K562 (cell line): ENCODE measurements at regions of chr6 and their contacts with region 1.

Region 1: DNA sequence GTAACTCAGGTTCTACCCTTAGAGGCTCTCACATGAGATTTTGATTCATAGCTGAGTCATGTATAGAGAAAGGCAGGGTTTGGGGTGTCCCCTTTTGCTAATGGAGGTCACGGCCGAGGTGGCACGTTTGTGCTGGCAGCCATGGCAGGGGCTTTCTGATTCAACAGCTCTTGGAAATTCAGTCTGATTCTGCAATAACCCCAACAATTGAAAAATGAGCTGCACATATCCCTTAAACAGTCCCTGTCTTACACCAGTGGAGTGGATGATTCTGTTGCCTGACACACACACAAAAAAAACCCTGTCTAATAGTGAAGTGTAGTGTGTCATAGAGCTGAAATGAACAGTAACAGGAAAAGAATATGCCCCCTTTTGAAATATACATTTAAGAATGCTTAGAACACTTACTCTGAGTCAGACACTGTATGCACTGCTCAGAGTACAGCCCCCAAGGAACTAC is 40.4 kb upstream of the ARG1 start:
- DNase-seq: no peak
- ATAC-seq: no peak
- H3K4me3 ChIP-seq: no peak overlapping the region
- H3K27ac ChIP-seq: no peak overlapping the region
- H3K4me1 ChIP-seq: no peaks in the 10 kb centered on the region
- H3K27me3 ChIP-seq: no peaks in the 10 kb centered on the region; a peak in 1 of 5 replicates
- CTCF ChIP-seq: no peak
- EP300 ChIP-seq: no peak
- POLR2A ChIP-seq: no peak
- RAD21 ChIP-seq: no peak

Region 2: GRCh38 chr6:130322673-130323268 is 1209.8 kb before region 1 on chr6:
- CTCF ChIA-PET with region 1: no interaction called
- POLR2A ChIA-PET with region 1: no interaction called
- in situ Hi-C with region 1: no loop called
- intact Hi-C with region 1: loop called (anchors 2 kb)
- DNase-seq: peak; percentile 9 to 62 (median 30)
- ATAC-seq: peak; percentile 80
- H3K4me3 ChIP-seq: no peak overlapping the region
- H3K27ac ChIP-seq: no peak overlapping the region
- H3K4me1 ChIP-seq: no peaks in the 10 kb centered on the region
- H3K27me3 ChIP-seq: no peaks in the 10 kb centered on the region
- CTCF ChIP-seq: peak; percentile 62 to 85 (median 77)
- EP300 ChIP-seq: no peak
- POLR2A ChIP-seq: no peak
- RAD21 ChIP-seq: peak; percentile 89

Region 3: DNA sequence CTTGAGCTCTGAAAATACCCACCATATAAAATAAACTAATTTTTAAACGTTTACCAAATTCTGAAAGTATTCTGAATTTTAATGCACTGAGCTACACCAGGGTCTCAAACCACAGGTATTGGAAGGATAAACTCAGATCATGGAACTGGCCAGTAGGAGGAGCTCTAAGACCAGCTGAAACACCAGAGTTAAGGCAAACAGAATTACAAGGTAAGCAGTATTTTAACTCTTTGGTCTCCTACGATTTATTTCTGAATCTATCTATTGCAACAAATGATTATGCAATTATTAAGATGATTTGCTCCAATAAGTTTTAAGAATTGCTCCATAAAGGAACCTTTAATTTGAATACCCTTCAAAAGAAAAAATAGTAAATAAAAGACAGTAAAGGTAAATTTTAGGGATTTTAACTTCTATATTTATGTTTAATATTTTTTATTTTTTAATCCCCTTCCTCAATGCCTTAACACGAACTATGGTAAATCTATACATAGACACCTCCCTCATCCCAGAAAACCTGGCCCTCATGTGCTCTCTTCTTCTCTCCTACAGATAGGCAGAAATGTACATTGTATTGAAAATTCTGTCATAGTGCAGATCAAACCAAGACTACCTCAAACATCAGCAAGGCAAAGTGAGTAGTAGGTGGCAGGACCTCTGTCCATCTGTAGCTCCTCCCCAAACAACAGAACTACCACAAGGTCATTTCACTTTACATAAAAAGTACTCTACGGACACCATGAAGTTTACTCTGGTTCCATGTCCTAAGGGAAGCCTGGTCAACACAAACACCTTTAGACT is 647.0 kb before region 1 on chr6:
- CTCF ChIA-PET with region 1: interaction called, 9 read pairs
- POLR2A ChIA-PET with region 1: no interaction called
- in situ Hi-C with region 1: loop called (anchors 25 kb)
- intact Hi-C with region 1: loop called (anchors 1 kb)
- DNase-seq: peak; percentile 58 to 82 (median 68)
- ATAC-seq: peak; percentile 98
- H3K4me3 ChIP-seq: no peak overlapping the region
- H3K27ac ChIP-seq: no peak overlapping the region
- H3K4me1 ChIP-seq: no peaks in the 10 kb centered on the region
- H3K27me3 ChIP-seq: no peaks in the 10 kb centered on the region
- CTCF ChIP-seq: peak; percentile 75 to 92 (median 81)
- EP300 ChIP-seq: no peak
- POLR2A ChIP-seq: no peak
- RAD21 ChIP-seq: peak; percentile 94 to 98

Region 4: DNA sequence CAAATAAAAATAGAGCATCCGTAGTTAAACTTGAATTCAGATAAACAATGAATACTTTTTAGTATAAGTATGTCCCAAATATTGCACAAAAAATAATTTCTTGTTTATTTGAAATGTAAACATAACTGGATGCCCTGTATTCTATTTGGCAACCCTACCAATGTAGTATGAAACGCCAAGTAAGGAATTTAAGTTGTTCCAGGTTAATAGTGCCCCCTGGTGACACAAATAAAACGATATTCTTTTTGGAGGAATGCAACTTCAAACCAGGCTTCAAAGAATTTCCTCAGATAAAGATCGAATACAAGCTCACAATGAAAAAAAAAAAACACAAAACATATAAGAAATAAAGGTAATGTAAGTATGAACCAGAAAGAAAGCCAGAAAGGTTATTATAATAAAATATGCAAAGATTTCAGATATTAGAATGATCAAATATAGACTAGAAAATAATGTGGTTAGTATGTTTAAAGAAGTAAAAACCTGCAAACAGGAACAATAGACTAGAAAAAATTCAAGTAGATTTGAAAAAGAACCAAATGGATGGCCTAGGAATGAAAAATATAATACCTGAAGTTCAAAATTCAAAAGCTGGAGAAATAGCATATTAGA is 415.8 kb before region 1 on chr6:
- CTCF ChIA-PET with region 1: no interaction called
- POLR2A ChIA-PET with region 1: no interaction called
- in situ Hi-C with region 1: no loop called
- intact Hi-C with region 1: loop called (anchors 5 kb)
- DNase-seq: peak; percentile 22 to 55 (median 40)
- ATAC-seq: peak; percentile 82
- H3K4me3 ChIP-seq: no peak overlapping the region
- H3K27ac ChIP-seq: no peak overlapping the region
- H3K4me1 ChIP-seq: no peaks in the 10 kb centered on the region
- H3K27me3 ChIP-seq: no peaks in the 10 kb centered on the region
- CTCF ChIP-seq: peak; percentile 37 to 63 (median 42); a peak in 4 of 6 replicates
- EP300 ChIP-seq: no peak
- POLR2A ChIP-seq: no peak
- RAD21 ChIP-seq: peak; percentile 83 to 86

Region 5: GRCh38 chr6:131182991-131183425 is 349.6 kb before region 1 on chr6:
- CTCF ChIA-PET with region 1: no interaction called
- POLR2A ChIA-PET with region 1: no interaction called
- in situ Hi-C with region 1: no loop called
- intact Hi-C with region 1: loop called (anchors 1 kb)
- DNase-seq: peak in 2 of 4 experiments; percentile 13 to 25
- ATAC-seq: peak; percentile 83
- H3K4me3 ChIP-seq: no peak overlapping the region
- H3K27ac ChIP-seq: no peak overlapping the region
- H3K4me1 ChIP-seq: no peaks in the 10 kb centered on the region
- H3K27me3 ChIP-seq: no peaks in the 10 kb centered on the region
- CTCF ChIP-seq: peak; percentile 33 to 51 (median 46); a peak in 4 of 6 replicates
- EP300 ChIP-seq: no peak
- POLR2A ChIP-seq: no peak
- RAD21 ChIP-seq: peak; percentile 35 to 39

Region 6: GRCh38 chr6:131199568-131200272 is 332.9 kb before region 1 on chr6:
- CTCF ChIA-PET with region 1: interaction called, 3 read pairs
- POLR2A ChIA-PET with region 1: no interaction called
- in situ Hi-C with region 1: no loop called
- intact Hi-C with region 1: loop called (anchors 5 kb)
- DNase-seq: peak in 2 of 4 experiments; percentile 11 to 15
- ATAC-seq: peak; percentile 80
- H3K4me3 ChIP-seq: no peak overlapping the region
- H3K27ac ChIP-seq: no peak overlapping the region
- H3K4me1 ChIP-seq: no peaks in the 10 kb centered on the region
- H3K27me3 ChIP-seq: no peaks in the 10 kb centered on the region
- CTCF ChIP-seq: peak; percentile 49 to 58 (median 51); a peak in 5 of 6 replicates
- EP300 ChIP-seq: no peak
- POLR2A ChIP-seq: no peak
- RAD21 ChIP-seq: peak in 1 of 2 experiments; percentile 43; a peak in 1 of 4 replicates

Region 7: DNA sequence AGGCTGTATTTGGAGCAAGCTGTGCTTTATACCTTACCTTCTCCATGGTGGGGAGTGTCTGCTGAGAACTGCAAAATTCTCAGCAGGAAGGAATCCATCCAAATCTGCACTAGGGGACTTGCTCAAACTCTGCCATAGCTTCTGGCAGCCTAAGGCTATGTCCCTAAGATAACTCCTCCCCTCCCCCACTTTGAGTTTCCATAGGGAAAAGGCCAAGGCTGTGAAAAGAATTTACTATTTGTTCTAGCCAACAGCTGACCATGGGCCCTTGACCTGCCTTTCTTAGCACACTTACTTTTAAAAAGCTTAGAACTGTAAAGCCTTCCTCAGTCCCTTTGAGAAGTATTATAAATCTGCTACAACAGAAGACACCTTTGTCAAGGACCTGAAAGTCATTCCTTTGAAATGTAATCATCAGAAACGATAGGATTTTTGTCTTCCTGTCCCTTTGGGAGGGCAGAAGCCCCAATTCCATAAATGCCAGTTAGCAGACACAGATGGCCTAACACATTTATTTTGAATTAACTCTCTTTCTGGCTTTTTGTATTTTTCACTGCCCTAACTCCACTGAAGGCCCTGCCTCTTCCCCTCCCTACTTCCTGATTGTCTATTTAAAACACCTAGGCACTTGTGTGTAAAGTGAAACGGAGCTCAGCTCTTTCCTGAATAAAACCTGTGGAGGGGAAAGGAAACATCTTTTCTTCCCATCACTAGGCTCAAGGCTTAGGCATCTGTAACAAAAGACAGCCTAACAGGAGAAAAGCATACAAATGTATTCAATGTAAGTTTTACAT is 240.3 kb before region 1 on chr6:
- CTCF ChIA-PET with region 1: no interaction called
- POLR2A ChIA-PET with region 1: no interaction called
- in situ Hi-C with region 1: no loop called
- intact Hi-C with region 1: no loop called
- DNase-seq: no peak
- ATAC-seq: no peak
- H3K4me3 ChIP-seq: no peak overlapping the region
- H3K27ac ChIP-seq: no peak overlapping the region
- H3K4me1 ChIP-seq: no peaks in the 10 kb centered on the region
- H3K27me3 ChIP-seq: peaks cover 8 to 12% of the 10 kb centered on the region in 2 experiments; a peak in 4 of 5 replicates
- CTCF ChIP-seq: no peak
- EP300 ChIP-seq: no peak
- POLR2A ChIP-seq: no peak
- RAD21 ChIP-seq: no peak

Region 8: GRCh38 chr6:131488780-131489179 is 43.8 kb before region 1 on chr6:
- CTCF ChIA-PET with region 1: no interaction called
- POLR2A ChIA-PET with region 1: no interaction called
- in situ Hi-C with region 1: no loop called
- intact Hi-C with region 1: no loop called
- DNase-seq: no peak
- ATAC-seq: no peak
- H3K4me3 ChIP-seq: no peak overlapping the region
- H3K27ac ChIP-seq: no peak overlapping the region
- H3K4me1 ChIP-seq: no peaks in the 10 kb centered on the region
- H3K27me3 ChIP-seq: no peaks in the 10 kb centered on the region
- CTCF ChIP-seq: no peak
- EP300 ChIP-seq: no peak
- POLR2A ChIP-seq: no peak
- RAD21 ChIP-seq: no peak